ENCODE measurements at regions of chr14 and their contacts with region 1.

Region 1: GRCh38 chr14:48398675-48399282 is 723.4 kb upstream of the MDGA2 start:
- DNase-seq: peak; percentile 51
- H3K4me3 Mint-ChIP-seq: no peak overlapping the region
- H3K27ac Mint-ChIP-seq: no peak overlapping the region
- H3K4me1 Mint-ChIP-seq: no peaks in the 10 kb centered on the region
- H3K27me3 Mint-ChIP-seq: no peaks in the 10 kb centered on the region
- CTCF ChIP-seq: peak; percentile 67

Region 2: DNA sequence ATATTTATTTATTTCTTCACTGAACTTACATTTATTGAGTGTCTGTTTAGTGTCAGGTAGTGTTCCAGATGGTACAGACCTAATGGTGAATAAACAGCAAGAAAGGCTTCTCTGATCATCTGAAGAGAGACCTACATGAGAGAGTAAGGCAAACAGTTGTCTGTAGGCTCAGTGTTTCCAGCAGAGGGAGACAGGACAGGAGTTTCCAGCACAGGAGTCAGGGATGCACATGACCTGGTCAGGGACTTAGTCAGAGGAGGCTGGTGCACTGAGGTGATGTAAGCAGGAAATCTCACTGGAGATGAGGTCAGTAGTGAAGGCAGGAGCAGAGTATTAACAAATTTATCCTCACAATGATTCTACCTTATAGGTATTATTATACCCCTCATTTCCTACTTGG is 956.6 kb before region 1 on chr14:
- CTCF ChIA-PET with region 1: no interaction called
- POLR2A ChIA-PET with region 1: no interaction called
- intact Hi-C with region 1: loop called (anchors 5 kb)
- DNase-seq: peak; percentile 62
- H3K4me3 Mint-ChIP-seq: no peak overlapping the region
- H3K27ac Mint-ChIP-seq: no peak overlapping the region
- H3K4me1 Mint-ChIP-seq: no peaks in the 10 kb centered on the region
- H3K27me3 Mint-ChIP-seq: peaks cover 73% of the 10 kb centered on the region
- CTCF ChIP-seq: peak; percentile 32

Region 3: GRCh38 chr14:47917345-47917954 is 481.3 kb before region 1 on chr14:
- CTCF ChIA-PET with region 1: interaction called, 19 read pairs
- POLR2A ChIA-PET with region 1: no interaction called
- intact Hi-C with region 1: loop called (anchors 1 kb)
- DNase-seq: peak; percentile 43
- H3K4me3 Mint-ChIP-seq: no peak overlapping the region
- H3K27ac Mint-ChIP-seq: no peak overlapping the region
- H3K4me1 Mint-ChIP-seq: no peaks in the 10 kb centered on the region
- H3K27me3 Mint-ChIP-seq: no peaks in the 10 kb centered on the region
- CTCF ChIP-seq: peak; percentile 70

Region 4: DNA sequence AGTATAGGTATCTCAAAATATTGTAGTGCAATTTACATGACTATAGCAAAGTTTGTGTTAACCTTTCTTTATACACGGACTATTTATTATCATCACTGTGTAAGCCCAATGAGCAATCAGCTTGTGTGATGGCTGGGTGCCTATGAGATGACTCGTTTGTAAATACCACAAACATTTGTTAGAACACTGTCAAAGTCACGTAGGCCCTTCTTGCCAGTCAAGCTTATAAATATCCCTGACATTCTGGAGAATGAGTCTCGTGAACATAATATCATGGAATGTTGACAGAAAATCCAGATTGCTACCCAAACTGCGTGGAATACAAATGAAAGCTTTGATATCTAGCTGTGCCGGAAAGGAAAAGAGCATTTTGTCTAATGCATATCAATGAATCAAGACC is 75.1 kb before region 1 on chr14:
- CTCF ChIA-PET with region 1: no interaction called
- POLR2A ChIA-PET with region 1: no interaction called
- intact Hi-C with region 1: no loop called
- DNase-seq: peak; percentile 41
- H3K4me3 Mint-ChIP-seq: no peak overlapping the region
- H3K27ac Mint-ChIP-seq: no peak overlapping the region
- H3K4me1 Mint-ChIP-seq: peaks cover 16% of the 10 kb centered on the region
- H3K27me3 Mint-ChIP-seq: no peaks in the 10 kb centered on the region
- CTCF ChIP-seq: no peak